Activated CD8-positive, alpha-beta T cell treated with anti-CD3 and anti-CD28 coated beads, Interleukin-2, amount 10 ng/mL, durations not matched to agents 7 days and 5 days (primary cell): ENCODE measurements at regions of chr5 and their contacts with region 1.

Region 1: DNA sequence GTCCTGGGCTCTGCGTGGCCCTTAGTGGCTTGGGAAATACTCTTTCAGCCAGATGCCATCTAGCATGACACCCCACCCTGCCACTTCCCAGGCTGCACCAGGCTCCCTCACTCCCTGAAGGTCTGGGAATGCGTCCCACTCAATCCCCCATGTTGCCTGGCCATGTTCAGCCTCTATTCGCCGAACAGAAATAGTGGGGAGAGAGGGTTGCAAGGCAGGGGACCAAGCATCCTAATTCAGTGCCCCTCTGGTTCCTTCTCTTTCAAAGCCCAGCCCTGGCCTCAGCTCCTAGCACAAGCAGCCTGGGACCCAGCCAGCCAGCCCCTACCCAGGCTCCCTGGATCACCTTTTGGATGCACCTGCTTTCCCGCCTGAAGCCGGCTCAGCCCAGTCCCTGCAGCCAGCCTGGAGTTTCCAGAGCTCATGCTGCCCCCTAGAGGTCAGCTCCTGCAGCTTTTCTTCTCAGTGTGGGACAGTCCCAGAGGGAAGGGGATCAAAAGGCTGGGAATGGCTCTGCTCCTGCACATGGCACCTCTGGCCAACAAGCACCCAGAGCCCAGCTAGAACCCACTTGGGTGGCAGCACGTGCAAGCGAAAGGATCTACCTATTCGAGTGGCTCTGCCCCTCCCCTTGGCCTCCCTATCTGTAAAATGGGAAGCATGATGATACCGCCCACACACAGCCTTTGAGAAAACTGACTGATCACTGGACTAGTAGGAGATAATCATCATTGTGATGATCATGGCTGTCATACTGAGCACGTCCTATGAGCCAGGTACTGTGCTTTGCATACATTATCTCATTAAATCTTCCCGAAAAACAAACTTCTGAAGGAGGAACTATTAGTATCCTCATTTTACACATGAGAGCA is 48.7 kb upstream of the C5orf58 start:
- DNase-seq: peak; percentile 56
- ATAC-seq: peak; percentile 81
- H3K4me3 Mint-ChIP-seq: no peak overlapping the region
- H3K27ac Mint-ChIP-seq: no peak overlapping the region
- H3K4me1 Mint-ChIP-seq: peaks cover 3% of the 10 kb centered on the region
- H3K27me3 Mint-ChIP-seq: peaks cover 7% of the 10 kb centered on the region

Region 2: DNA sequence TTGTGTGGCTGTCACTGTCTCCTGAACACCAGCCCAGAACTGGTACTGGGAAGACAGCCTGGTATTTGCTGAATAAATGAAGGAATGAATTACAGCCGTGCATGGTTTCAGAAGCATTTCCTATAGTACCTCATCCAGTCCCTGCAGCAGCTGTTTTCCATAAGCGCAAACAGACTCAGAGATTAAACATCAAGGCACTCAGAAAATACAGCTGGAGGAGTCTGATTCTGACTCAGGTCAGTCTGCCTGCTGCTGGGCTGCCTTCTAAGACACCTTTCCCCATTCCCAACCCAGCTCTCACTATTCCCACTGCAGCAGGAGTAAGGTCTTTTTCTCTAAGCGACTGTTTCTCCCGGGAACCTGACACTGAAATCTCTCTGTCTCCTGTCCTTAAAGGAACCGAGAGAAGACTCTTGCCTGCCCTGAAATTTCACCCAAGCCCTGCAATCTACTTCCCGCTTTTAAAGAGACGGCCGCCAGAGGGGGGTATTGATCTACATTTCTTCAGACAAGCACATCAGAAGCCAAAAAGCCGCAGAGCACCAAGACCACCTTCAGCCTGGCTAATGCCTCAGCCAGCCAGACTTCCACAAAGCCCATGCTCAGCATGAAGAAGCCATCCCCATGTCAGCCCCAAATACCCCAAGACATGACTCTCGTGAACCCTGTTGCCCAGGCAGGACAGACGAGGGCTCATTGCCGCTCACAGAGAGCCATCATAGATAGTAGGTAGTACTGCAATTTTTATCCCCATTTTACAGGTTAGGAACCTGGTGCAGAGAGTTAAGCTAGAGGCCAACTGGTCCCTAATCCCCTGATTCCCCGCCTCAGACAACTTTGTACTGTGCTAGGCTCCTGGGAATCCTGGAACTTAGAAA is 83.7 kb before region 1 on chr5:
- CTCF ChIA-PET with region 1: interaction called, 38 read pairs
- POLR2A ChIA-PET with region 1: no interaction called
- DNase-seq: peak; percentile 82
- ATAC-seq: peak; percentile 45
- H3K4me3 Mint-ChIP-seq: no peak overlapping the region
- H3K27ac Mint-ChIP-seq: no peak overlapping the region
- H3K4me1 Mint-ChIP-seq: no peaks in the 10 kb centered on the region
- H3K27me3 Mint-ChIP-seq: peaks cover 14% of the 10 kb centered on the region

Region 3: DNA sequence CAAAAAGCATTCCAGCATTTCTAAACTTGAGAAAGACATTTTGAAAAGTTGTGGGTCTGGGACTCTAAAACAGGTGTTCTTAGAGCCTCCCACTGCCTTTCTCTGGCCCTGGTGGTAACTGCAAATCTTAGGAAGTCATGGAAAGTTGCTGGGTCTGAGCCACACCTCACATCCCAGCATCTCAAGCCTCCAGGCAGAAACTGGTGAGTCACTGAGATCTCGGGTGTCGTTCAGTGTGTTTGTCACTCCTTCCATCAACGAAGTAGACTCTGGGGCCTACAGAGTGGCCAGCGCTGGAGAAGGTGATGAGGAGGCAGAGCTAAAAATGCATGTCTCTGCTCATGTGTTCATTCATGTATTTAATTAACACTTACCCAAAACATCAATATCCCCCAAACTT is 10.8 kb before region 1 on chr5:
- CTCF ChIA-PET with region 1: interaction called, 16 read pairs
- POLR2A ChIA-PET with region 1: no interaction called
- DNase-seq: no peak
- ATAC-seq: no peak
- H3K4me3 Mint-ChIP-seq: no peak overlapping the region
- H3K27ac Mint-ChIP-seq: no peak overlapping the region
- H3K4me1 Mint-ChIP-seq: no peaks in the 10 kb centered on the region
- H3K27me3 Mint-ChIP-seq: peaks cover 6% of the 10 kb centered on the region

Region 4: DNA sequence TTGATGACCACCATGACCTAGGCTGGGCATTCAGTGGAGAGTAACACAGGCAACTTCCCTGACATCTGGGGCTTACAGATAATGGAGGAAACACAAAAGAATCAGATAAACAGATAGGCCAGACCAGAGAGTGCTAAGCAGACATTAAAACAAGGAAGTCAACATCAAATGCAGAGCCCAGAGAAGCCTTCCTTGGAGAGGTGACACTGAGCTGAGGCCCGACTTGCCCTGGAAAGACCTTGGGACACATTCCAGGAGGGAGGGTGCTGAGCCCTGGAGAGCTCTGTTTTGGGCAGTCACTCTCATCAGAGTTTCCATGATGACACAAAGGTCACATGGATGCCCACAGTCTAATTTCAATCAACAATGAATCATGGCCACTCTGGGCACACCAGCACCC is 16.8 kb after region 1 on chr5:
- CTCF ChIA-PET with region 1: interaction called, 19 read pairs
- POLR2A ChIA-PET with region 1: no interaction called
- DNase-seq: no peak
- ATAC-seq: no peak
- H3K4me3 Mint-ChIP-seq: no peak overlapping the region
- H3K27ac Mint-ChIP-seq: no peak overlapping the region
- H3K4me1 Mint-ChIP-seq: no peaks in the 10 kb centered on the region
- H3K27me3 Mint-ChIP-seq: peaks cover 14% of the 10 kb centered on the region